ENCODE measurements at regions of chr22 and their contacts with region 1.

Region 1: DNA sequence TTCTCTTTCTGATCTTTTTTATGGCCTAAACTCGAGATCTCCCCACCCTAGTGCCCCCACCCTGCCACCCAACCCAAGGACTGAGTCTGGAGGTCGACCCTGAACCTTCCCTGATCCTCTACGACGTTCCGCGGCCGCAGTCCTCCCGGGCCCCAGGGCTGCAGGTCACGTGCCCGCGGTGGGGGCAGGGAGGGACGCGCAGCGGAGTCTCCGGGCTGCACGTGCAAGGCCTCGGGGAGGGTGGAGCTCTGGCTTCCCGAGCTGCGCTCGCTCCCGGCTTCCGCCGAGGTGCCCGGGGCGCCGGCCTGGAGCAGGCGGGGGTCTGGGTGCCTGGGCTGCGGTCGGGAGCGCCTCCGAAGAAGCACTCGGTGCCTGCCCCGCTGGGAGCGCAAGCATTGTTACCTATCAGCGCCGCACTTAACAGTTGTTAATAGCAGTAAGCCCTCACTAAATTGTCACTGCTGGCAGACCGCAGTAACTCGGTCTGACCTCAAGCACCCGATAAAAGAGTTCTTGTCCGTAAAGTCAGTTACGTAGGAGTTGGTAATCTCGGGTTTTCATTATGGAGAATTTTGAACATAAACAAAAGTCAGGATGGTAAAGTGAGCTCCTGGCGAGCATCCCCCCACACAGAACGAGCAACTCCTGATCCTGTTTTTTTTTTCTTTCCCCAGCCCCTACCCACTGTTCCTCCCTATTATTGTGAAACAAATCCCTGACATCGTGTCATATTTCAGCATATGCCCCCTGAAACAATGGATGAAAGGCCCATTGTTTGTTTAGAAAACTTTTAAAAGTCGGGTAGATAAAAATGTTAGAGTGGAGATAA is 69.7 kb upstream of the EP300 start:
- DNase-seq: peak; percentile 59 to 94
- H3K4me3 ChIP-seq: peak overlapping the region; percentile 81 to 89
- H3K27ac ChIP-seq: peak overlapping the region; percentile 95 to 96
- H3K4me1 ChIP-seq: peaks cover 3% of the 10 kb centered on the region in 2 donors
- H3K27me3 ChIP-seq: no peaks in the 10 kb centered on the region
- CTCF ChIP-seq: no peak

Region 2: GRCh38 chr22:41091132-41092022 is 68.7 kb after region 1 on chr22:
- intact Hi-C with region 1: loop called (anchors 1 kb)
- DNase-seq: peak; percentile 96 to 100
- H3K4me3 ChIP-seq: peak overlapping the region; percentile 84 to 94
- H3K27ac ChIP-seq: peak overlapping the region; percentile 99 to 100
- H3K4me1 ChIP-seq: peaks cover 0 to 4% of the 10 kb centered on the region in 2 donors
- H3K27me3 ChIP-seq: no peaks in the 10 kb centered on the region
- CTCF ChIP-seq: no peak

Region 3: GRCh38 chr22:41140365-41140957 is 117.8 kb after region 1 on chr22:
- intact Hi-C with region 1: no loop called
- DNase-seq: no peak
- H3K4me3 ChIP-seq: no peak overlapping the region
- H3K27ac ChIP-seq: no peak overlapping the region
- H3K4me1 ChIP-seq: no peaks in the 10 kb centered on the region
- H3K27me3 ChIP-seq: no peaks in the 10 kb centered on the region
- CTCF ChIP-seq: no peak